ENCODE measurements at regions of chr10 and their contacts with region 1.

Region 1: GRCh38 chr10:69092959-69093850 is 5.3 kb downstream of the SRGN start:
- DNase-seq: peak; percentile 66 to 93 (median 83)
- ATAC-seq: peak; percentile 21
- H3K4me3 ChIP-seq: no peak overlapping the region
- H3K4me3 Mint-ChIP-seq: peak overlapping the region; percentile 26
- H3K27ac ChIP-seq: peak overlapping the region in 1 of 2 experiments; percentile 68
- H3K27ac Mint-ChIP-seq: peak overlapping the region; percentile 93
- H3K4me1 ChIP-seq: peaks cover 47% of the 10 kb centered on the region
- H3K4me1 Mint-ChIP-seq: peaks cover 69% of the 10 kb centered on the region
- H3K27me3 ChIP-seq: no peaks in the 10 kb centered on the region
- H3K27me3 Mint-ChIP-seq: no peaks in the 10 kb centered on the region
- CTCF ChIP-seq: peak; percentile 76

Region 2: DNA sequence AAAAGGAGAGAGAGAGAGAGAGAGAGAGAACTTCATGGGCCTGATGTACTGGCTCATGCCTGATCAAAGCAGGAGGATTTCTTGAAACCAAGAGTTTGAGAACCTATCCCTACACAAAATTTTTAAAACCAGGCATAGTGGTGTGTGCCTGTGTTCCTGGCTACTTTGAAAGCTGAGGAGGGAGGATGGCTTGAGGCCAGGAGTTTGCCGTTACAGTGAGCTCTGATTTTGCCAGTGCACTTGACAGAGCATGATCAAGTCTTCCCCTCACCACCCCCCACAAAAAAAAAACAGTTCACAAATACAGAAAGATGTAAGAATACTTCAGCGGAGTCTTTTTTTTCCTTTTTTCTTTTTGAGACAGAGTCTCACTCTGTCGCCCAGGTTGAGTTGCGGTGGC is 424.2 kb before region 1 on chr10:
- CTCF ChIA-PET with region 1: no interaction called
- POLR2A ChIA-PET with region 1: no interaction called
- intact Hi-C with region 1: no loop called
- DNase-seq: no peak
- ATAC-seq: no peak
- H3K4me3 ChIP-seq: no peak overlapping the region
- H3K4me3 Mint-ChIP-seq: no peak overlapping the region
- H3K27ac ChIP-seq: no peak overlapping the region
- H3K27ac Mint-ChIP-seq: no peak overlapping the region
- H3K4me1 ChIP-seq: no peaks in the 10 kb centered on the region
- H3K4me1 Mint-ChIP-seq: no peaks in the 10 kb centered on the region
- H3K27me3 ChIP-seq: no peaks in the 10 kb centered on the region
- H3K27me3 Mint-ChIP-seq: no peaks in the 10 kb centered on the region
- CTCF ChIP-seq: no peak

Region 3: GRCh38 chr10:68742397-68742796 is 350.8 kb before region 1 on chr10:
- CTCF ChIA-PET with region 1: no interaction called
- POLR2A ChIA-PET with region 1: no interaction called
- intact Hi-C with region 1: no loop called
- DNase-seq: no peak
- ATAC-seq: no peak
- H3K4me3 ChIP-seq: no peak overlapping the region
- H3K4me3 Mint-ChIP-seq: no peak overlapping the region
- H3K27ac ChIP-seq: no peak overlapping the region
- H3K27ac Mint-ChIP-seq: no peak overlapping the region
- H3K4me1 ChIP-seq: no peaks in the 10 kb centered on the region
- H3K4me1 Mint-ChIP-seq: peaks cover 5% of the 10 kb centered on the region
- H3K27me3 ChIP-seq: no peaks in the 10 kb centered on the region
- H3K27me3 Mint-ChIP-seq: no peaks in the 10 kb centered on the region
- CTCF ChIP-seq: no peak

Region 4: GRCh38 chr10:68988530-68989316 is 104.5 kb before region 1 on chr10 and contains the start of gene KIFBP:
- CTCF ChIA-PET with region 1: interaction called, 12 read pairs
- POLR2A ChIA-PET with region 1: interaction called, 6 read pairs
- intact Hi-C with region 1: loop called in 1 of 2 experiments (anchors 1 kb)
- DNase-seq: peak; percentile 47 to 95 (median 79)
- ATAC-seq: peak; percentile 81
- H3K4me3 ChIP-seq: peak within 1 kb of the TSS; percentile 68 to 85
- H3K4me3 Mint-ChIP-seq: peak within 1 kb of the TSS; percentile 99
- H3K27ac ChIP-seq: peak within 1 kb of the TSS; percentile 31 to 79
- H3K27ac Mint-ChIP-seq: peak within 1 kb of the TSS; percentile 95
- H3K4me1 ChIP-seq: peaks cover 29% of the 10 kb centered on the region
- H3K4me1 Mint-ChIP-seq: peaks cover 56% of the 10 kb centered on the region
- H3K27me3 ChIP-seq: no peaks in the 10 kb centered on the region
- H3K27me3 Mint-ChIP-seq: no peaks in the 10 kb centered on the region
- CTCF ChIP-seq: peak; percentile 41
- total RNA-seq, gene KIFBP: 4.6 to 5.8 TPM

Region 5: GRCh38 chr10:69004821-69005220 is 88.4 kb before region 1 on chr10:
- CTCF ChIA-PET with region 1: interaction called, 153 read pairs
- POLR2A ChIA-PET with region 1: interaction called, 19 read pairs
- intact Hi-C with region 1: loop called (anchors 1 kb)
- DNase-seq: peak in 2 of 9 experiments; percentile 61 to 74
- ATAC-seq: peak; percentile 87
- H3K4me3 ChIP-seq: no peak overlapping the region
- H3K4me3 Mint-ChIP-seq: no peak overlapping the region
- H3K27ac ChIP-seq: no peak overlapping the region
- H3K27ac Mint-ChIP-seq: no peak overlapping the region
- H3K4me1 ChIP-seq: no peaks in the 10 kb centered on the region
- H3K4me1 Mint-ChIP-seq: peaks cover 2% of the 10 kb centered on the region
- H3K27me3 ChIP-seq: no peaks in the 10 kb centered on the region
- H3K27me3 Mint-ChIP-seq: no peaks in the 10 kb centered on the region
- CTCF ChIP-seq: peak; percentile 76

Region 6: DNA sequence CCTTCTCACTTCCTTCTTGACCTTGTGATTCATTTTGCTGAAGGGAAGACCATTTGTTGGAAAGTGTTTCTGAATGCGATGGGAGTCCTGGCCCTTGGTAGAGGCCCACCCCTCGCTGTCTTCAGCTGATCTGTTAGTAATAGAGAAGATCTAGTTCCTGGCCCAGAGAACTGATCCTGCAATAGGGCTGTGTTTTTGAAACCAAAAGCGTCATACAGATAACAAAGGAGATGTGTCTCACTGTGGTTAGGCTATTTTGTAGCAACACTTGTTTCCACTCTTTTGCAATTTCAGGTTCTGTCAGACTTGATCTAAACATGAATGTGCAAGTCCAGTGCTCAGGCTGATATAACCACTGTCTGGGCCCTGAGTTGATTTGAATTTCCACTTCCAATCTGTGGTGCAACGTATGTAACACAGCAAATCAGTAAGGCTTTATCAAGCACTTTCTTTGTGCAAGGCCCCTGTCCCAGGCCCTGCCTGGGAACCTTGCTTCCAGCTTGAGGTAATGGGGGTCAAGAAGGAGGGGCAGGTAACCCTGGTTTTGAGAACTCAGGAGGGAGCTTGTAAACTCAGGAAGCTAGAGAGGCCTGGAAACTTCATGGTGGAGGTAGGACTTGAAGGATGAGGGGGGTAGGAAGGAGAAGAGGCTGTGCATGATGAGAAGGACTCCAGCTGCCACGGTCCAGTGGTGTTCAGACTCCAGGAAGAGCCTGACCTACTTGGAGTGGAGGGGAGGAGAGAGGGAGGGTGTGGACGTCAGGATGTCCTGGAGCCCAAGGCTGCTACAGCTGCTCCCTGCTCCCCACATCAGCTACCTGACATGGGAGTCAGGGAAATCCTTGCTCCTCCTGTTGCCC is 47.5 kb before region 1 on chr10:
- CTCF ChIA-PET with region 1: interaction called, 14 read pairs
- POLR2A ChIA-PET with region 1: interaction called, 6 read pairs
- intact Hi-C with region 1: loop called (anchors 1 to 2 kb)
- DNase-seq: peak in 8 of 9 experiments; percentile 6 to 79 (median 43)
- ATAC-seq: peak; percentile 78
- H3K4me3 ChIP-seq: no peak overlapping the region
- H3K4me3 Mint-ChIP-seq: peak overlapping the region; percentile 35
- H3K27ac ChIP-seq: peak overlapping the region; percentile 45 to 89
- H3K27ac Mint-ChIP-seq: peak overlapping the region; percentile 93
- H3K4me1 ChIP-seq: peaks cover 27% of the 10 kb centered on the region
- H3K4me1 Mint-ChIP-seq: peaks cover 24% of the 10 kb centered on the region
- H3K27me3 ChIP-seq: no peaks in the 10 kb centered on the region
- H3K27me3 Mint-ChIP-seq: no peaks in the 10 kb centered on the region
- CTCF ChIP-seq: no peak

Region 7: GRCh38 chr10:69061305-69062161 is 31.7 kb before region 1 on chr10:
- CTCF ChIA-PET with region 1: interaction called, 4 read pairs
- POLR2A ChIA-PET with region 1: interaction called, 5 read pairs
- intact Hi-C with region 1: loop called in 1 of 2 experiments (anchors 2 kb)
- DNase-seq: peak in 7 of 9 experiments; percentile 22 to 73 (median 39)
- ATAC-seq: peak; percentile 83
- H3K4me3 ChIP-seq: peak overlapping the region; percentile 13 to 21
- H3K4me3 Mint-ChIP-seq: peak overlapping the region; percentile 79
- H3K27ac ChIP-seq: peak overlapping the region in 1 of 2 experiments; percentile 34
- H3K27ac Mint-ChIP-seq: peak overlapping the region; percentile 84
- H3K4me1 ChIP-seq: peaks cover 27% of the 10 kb centered on the region
- H3K4me1 Mint-ChIP-seq: peaks cover 31% of the 10 kb centered on the region
- H3K27me3 ChIP-seq: no peaks in the 10 kb centered on the region
- H3K27me3 Mint-ChIP-seq: no peaks in the 10 kb centered on the region
- CTCF ChIP-seq: no peak